GM12878 (cell line): ENCODE measurements at regions of chr2 and their contacts with region 1.

Region 1: DNA sequence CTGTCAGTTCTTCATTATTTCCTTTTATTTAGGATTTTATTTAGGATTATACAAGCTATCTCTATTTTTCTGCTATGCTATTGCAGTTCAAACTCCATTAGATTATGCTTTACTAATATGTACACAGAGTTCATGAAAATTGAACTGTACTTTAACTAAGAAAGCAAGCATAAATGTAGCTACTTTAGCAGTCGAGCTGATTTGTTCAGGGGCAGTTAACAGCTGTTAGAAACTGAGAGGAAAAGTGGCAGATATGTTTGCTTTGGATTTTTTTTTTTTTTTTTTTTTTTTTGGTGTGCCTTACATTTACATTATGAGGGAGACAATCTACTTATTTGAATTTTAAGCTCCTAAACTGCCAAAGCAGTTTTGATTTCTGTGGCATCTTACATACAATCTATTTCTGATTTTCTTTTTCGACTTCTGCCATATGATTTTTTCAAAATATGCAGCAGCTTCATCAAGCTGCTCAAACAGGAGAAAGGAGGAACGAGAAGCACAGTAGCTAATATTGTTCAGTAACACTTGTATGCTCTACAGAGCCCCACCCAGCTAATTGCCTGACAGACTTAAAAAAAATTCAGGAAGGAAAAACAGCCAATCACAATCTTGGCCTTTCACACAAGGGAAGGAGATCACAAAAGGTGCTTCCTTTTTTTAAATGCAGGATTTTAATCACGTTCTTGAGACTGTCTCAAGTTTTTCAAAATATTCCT is 233.4 kb upstream of the SIX3 start:
- DNase-seq: peak; percentile 25
- ATAC-seq: peak; percentile 86
- H3K4me3 ChIP-seq: no peak overlapping the region; the same call in 1 of the 2 replicates
- H3K27ac ChIP-seq: peak overlapping the region; percentile 23; the same call in 1 of the 2 replicates
- H3K4me1 ChIP-seq: peaks cover 8% of the 10 kb centered on the region
- H3K27me3 ChIP-seq: no peaks in the 10 kb centered on the region
- CTCF ChIP-seq: no peak
- EP300 ChIP-seq: no peak
- POLR2A ChIP-seq: no peak
- RAD21 ChIP-seq: no peak

Region 2: GRCh38 chr2:44470151-44470550 is 238.0 kb before region 1 on chr2:
- CTCF ChIA-PET with region 1: no interaction called
- POLR2A ChIA-PET with region 1: no interaction called
- RAD21 ChIA-PET with region 1: no interaction called
- SMC1A ChIA-PET with region 1: no interaction called
- in situ Hi-C with region 1: no loop called
- intact Hi-C with region 1: no loop called
- DNase-seq: no peak
- ATAC-seq: no peak
- H3K4me3 ChIP-seq: no peak overlapping the region
- H3K27ac ChIP-seq: no peak overlapping the region
- H3K4me1 ChIP-seq: no peaks in the 10 kb centered on the region
- H3K27me3 ChIP-seq: no peaks in the 10 kb centered on the region
- CTCF ChIP-seq: no peak
- EP300 ChIP-seq: no peak
- POLR2A ChIP-seq: no peak
- RAD21 ChIP-seq: no peak

Region 3: GRCh38 chr2:44674473-44675284 is 33.4 kb before region 1 on chr2:
- CTCF ChIA-PET with region 1: interaction called, 4 read pairs
- POLR2A ChIA-PET with region 1: no interaction called
- RAD21 ChIA-PET with region 1: interaction called, 3 read pairs
- SMC1A ChIA-PET with region 1: interaction called, 19 read pairs
- in situ Hi-C with region 1: no loop called
- intact Hi-C with region 1: no loop called
- DNase-seq: no peak
- ATAC-seq: peak; percentile 46; the same call in 2 of the 3 replicates
- H3K4me3 ChIP-seq: no peak overlapping the region
- H3K27ac ChIP-seq: no peak overlapping the region
- H3K4me1 ChIP-seq: no peaks in the 10 kb centered on the region
- H3K27me3 ChIP-seq: no peaks in the 10 kb centered on the region
- CTCF ChIP-seq: no peak
- EP300 ChIP-seq: no peak
- POLR2A ChIP-seq: no peak
- RAD21 ChIP-seq: no peak

Region 4: DNA sequence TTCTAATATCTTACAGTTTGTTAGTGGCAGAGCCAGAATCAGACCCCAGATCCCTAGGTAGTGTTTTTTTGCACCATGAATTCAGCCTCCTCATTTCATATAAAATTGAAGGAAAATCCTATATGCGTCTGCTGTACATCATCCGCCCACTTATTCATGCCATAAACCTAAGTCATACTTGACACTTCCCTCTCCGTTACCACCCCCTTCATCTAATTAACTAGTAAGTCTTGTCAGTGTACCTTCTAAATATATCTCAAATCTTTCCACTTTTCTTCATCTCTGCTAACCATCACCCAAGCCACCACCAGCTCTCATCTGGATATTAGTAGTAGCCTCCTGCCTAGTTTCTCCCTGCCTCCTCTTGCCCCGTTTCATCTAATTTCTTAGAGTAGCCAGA is 15.3 kb before region 1 on chr2:
- CTCF ChIA-PET with region 1: interaction called, 8 read pairs
- POLR2A ChIA-PET with region 1: interaction called, 4 read pairs
- RAD21 ChIA-PET with region 1: interaction called, 3 read pairs
- SMC1A ChIA-PET with region 1: interaction called, 11 read pairs
- in situ Hi-C with region 1: no loop called
- intact Hi-C with region 1: no loop called
- DNase-seq: no peak
- ATAC-seq: no peak
- H3K4me3 ChIP-seq: no peak overlapping the region
- H3K27ac ChIP-seq: no peak overlapping the region
- H3K4me1 ChIP-seq: no peaks in the 10 kb centered on the region
- H3K27me3 ChIP-seq: no peaks in the 10 kb centered on the region
- CTCF ChIP-seq: no peak
- EP300 ChIP-seq: no peak
- POLR2A ChIP-seq: no peak
- RAD21 ChIP-seq: no peak

Region 5: GRCh38 chr2:44722026-44722625 is 14.0 kb after region 1 on chr2:
- CTCF ChIA-PET with region 1: interaction called, 19 read pairs
- POLR2A ChIA-PET with region 1: interaction called, 6 read pairs
- RAD21 ChIA-PET with region 1: interaction called, 15 read pairs
- SMC1A ChIA-PET with region 1: interaction called, 17 read pairs
- in situ Hi-C with region 1: no loop called
- intact Hi-C with region 1: no loop called
- DNase-seq: peak; percentile 13
- ATAC-seq: peak; percentile 82
- H3K4me3 ChIP-seq: no peak overlapping the region
- H3K27ac ChIP-seq: peak overlapping the region; percentile 37; the same call in 1 of the 2 replicates
- H3K4me1 ChIP-seq: peaks cover 19% of the 10 kb centered on the region
- H3K27me3 ChIP-seq: no peaks in the 10 kb centered on the region
- CTCF ChIP-seq: no peak
- EP300 ChIP-seq: no peak
- POLR2A ChIP-seq: no peak
- RAD21 ChIP-seq: no peak